KBM-7 (cell line): ENCODE measurements at regions of chr11 and their contacts with region 1.

Region 1: DNA sequence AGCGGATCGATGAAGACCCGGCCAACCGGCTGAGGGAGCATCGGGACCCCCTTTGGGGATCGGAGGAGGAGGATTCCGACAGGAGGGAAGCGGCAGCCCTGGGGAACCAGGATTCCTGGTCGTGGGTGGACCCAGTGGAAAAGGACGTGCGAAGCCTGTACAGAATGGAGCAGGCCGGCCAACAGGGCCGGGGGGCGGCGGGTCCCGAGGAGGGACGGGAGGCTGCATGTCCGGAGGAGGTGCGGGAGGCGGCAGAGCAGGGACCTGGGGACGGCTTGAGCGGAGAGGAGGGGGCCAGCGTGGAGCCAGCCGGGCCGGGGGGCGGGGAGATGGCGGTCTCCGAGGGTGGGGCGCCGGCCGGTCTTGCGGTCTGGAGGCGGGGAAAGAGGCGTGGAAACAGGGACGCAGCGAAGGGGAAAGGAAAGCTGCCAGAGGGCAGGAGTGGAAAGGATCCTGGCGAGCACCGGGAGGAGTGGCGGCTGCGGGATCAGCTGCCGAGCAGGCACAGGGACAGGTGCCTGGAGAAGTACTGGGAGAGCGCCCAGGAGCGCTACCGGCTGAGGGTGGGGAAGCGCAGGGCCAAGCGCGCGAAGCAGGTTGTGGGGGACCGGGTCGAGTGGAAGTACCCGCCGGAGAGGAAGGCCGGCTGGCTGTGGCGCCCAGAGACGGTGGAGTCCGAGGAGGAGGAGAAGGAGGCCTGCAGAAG is at the start of gene ANO5:
- DNase-seq: peak; percentile 69

Region 2: DNA sequence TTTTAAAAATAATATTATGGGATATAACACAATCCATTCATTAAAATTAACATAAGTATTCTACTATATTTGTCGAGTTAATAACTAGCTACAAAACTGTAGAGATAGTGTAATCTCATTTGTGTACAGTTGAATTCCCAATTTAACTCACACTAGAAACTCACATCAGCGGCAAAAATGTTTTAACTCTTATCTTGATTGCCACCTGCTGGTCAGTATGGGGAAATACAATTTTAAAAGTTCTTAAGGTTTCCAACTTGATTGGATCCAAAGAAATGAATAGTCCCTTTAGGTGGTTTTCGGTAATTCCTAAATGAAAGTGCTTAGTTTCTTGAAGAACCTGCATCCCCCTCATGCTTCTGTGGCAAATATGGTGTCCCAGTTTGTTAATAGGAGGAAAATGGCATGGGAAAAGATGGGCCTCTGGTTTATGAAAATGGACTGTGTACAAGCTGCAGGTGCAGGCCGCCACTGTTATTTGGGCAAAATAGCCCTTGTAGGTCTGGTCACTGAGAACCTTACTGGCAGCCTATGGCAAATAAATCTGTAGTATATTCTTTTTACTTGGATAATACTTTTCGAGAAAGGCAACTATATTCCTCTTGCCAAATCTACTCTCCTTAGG is 111.7 kb after region 1 on chr11:
- in situ Hi-C with region 1: loop called (anchors 25 kb)
- DNase-seq: peak; percentile 32